Naive thymus-derived CD4-positive, alpha-beta T cell (primary cell): ENCODE measurements at regions of chr18 and their contacts with region 1.

Region 1: DNA sequence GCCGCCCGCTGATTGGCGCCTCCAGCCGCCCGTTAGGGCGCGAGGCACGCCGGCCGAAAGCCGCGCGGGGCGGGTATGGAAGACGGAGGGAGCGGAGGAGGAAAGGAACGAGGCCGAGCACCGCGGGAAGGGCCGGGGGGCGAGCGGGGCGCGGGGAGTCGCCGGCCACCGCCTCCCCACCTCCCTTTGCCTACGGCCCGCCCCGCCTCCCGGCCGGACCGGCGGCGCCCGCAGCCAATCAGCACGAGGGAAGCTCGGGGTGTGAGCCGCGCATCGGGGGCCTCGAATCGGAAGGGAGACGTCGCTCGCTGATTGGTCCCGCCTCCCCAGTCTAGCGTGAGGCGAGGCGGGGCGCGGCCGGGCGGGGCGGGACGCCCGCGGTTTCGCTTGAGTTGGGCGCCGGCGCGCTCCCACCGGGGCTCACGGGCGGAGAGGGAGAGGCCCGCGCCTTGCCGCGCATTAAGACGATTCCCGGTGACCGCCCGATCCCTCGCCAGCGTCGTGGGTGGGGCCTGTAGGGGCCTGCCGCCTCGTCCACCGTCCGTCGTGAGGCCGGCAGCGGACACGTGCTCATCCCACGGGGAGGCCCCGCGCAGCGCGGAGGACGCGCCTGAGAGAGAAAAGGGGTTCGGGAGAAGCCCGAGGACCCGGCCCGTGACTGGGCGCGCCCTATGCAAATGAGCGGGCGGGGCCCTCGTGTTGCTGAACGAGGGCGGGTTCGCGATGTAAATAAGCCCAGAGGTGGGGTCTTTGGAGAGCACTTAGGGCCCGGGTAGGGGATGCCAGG is 665 bp upstream of the SMAD2 start:
- DNase-seq: peak; percentile 91 to 96 (median 94)
- ATAC-seq: peak; percentile 88
- H3K4me3 ChIP-seq: peak overlapping the region; percentile 64
- H3K4me3 Mint-ChIP-seq: peak overlapping the region; percentile 78 to 92 (median 88)
- H3K27ac ChIP-seq: peak overlapping the region; percentile 91
- H3K27ac Mint-ChIP-seq: peak overlapping the region; percentile 89 to 98 (median 94)
- H3K4me1 ChIP-seq: peaks cover 19 to 36% of the 10 kb centered on the region in 2 donors
- H3K4me1 Mint-ChIP-seq: peaks cover 39 to 46% (median 42%) of the 10 kb centered on the region in 7 donors
- H3K27me3 ChIP-seq: no peaks in the 10 kb centered on the region
- H3K27me3 Mint-ChIP-seq: peaks cover 0 to 13% (median 0%) of the 10 kb centered on the region in 5 donors

Region 2: DNA sequence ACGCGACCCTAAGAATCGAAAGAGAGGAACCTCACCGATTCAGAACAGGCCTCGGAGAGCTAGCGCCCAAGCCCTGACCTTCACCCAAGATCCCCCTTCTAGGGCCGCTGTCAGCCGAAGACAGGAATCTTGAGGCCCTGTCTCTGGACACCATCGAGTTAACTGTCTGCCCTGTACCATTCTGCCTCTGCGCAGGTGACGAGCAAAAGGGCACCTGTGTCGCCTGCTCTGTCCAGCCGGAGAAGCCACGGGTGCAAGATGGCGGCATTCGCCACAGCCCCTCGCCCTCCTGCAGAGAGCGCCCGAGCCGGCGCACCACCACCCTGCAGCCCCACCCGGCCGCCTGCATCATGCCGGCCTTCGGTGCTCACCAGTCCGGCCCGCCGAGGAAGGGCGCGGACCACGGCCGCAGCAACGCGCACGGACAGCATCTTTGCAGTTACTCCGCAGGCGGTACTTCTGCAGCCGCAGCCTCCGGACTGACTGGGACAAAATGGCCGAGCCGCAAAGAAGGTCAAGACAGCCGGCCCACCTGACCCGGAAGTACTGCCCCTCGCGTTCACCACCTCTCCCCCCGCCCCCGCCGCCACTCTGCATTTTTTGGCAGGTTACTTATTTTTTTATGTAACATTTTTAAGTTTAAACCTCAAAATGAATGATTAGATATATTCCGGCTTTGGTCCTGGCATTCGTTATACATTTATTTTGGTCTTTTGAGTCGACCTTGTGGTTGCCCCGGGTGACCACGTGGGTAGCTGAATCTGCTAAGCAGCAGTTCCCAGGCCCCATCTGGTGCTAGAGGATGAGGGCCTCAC is 1833.1 kb before region 1 on chr18 and contains the start of gene ATP5F1A:
- CTCF ChIA-PET with region 1: no interaction called
- POLR2A ChIA-PET with region 1: no interaction called
- intact Hi-C with region 1: loop called (anchors 2 to 5 kb)
- DNase-seq: peak; percentile 69 to 86 (median 80)
- ATAC-seq: peak; percentile 94
- H3K4me3 ChIP-seq: peak within 1 kb of the TSS; percentile 92
- H3K4me3 Mint-ChIP-seq: peak within 1 kb of the TSS; percentile 92 to 99 (median 96)
- H3K27ac ChIP-seq: peak within 1 kb of the TSS; percentile 94
- H3K27ac Mint-ChIP-seq: peak within 1 kb of the TSS; percentile 94 to 99 (median 97)
- H3K4me1 ChIP-seq: peaks cover 18 to 32% of the 10 kb centered on the region in 2 donors
- H3K4me1 Mint-ChIP-seq: peaks cover 18 to 43% (median 35%) of the 10 kb centered on the region in 7 donors
- H3K27me3 ChIP-seq: no peaks in the 10 kb centered on the region
- H3K27me3 Mint-ChIP-seq: peaks cover 0 to 2% (median 0%) of the 10 kb centered on the region in 5 donors
- total RNA-seq, gene ATP5F1A: 181 to 311 (median 212) TPM

Region 3: DNA sequence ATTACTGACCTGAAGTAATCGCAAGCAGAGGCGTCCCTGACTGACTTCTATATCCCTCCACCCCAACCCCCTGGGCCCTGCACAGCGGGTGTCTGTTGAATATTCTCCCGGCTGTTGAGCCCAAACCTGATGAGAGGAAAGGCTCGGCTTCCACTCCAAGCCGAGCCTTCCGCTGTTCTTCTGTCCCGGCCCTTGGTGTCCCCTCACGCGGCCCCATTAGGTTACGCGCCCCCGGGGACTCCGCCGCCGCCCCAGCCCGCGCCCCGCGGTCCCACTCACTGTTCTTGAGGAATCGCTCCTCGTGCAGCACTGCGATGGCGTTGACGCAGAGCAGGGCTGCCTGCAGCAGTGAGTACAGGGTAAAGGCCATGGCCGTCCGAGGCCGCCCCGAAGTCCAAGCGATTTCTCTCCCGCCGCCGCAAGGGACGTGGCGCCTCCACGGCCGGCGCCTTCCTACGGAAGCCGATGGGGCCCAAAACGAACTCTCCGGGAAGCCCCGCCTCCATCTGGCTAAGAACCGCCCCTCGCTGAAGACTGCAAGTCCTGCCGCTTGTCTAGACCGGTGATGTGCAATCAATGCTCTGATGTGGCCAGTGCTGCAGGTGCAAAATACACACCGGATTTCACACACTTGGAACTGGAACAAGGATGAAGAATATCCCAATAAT is 755.1 kb before region 1 on chr18 and contains the start of gene IER3IP1:
- CTCF ChIA-PET with region 1: no interaction called
- POLR2A ChIA-PET with region 1: no interaction called
- intact Hi-C with region 1: loop called (anchors 2 to 5 kb)
- DNase-seq: peak; percentile 71 to 89 (median 85)
- ATAC-seq: peak; percentile 97
- H3K4me3 ChIP-seq: peak within 1 kb of the TSS; percentile 94
- H3K4me3 Mint-ChIP-seq: peak within 1 kb of the TSS in 8 of 10 donors; percentile 6 to 64 (median 53)
- H3K27ac ChIP-seq: peak within 1 kb of the TSS; percentile 72
- H3K27ac Mint-ChIP-seq: peak within 1 kb of the TSS in 6 of 9 donors; percentile 70 to 91 (median 82)
- H3K4me1 ChIP-seq: peaks cover 10 to 17% of the 10 kb centered on the region in 2 donors
- H3K4me1 Mint-ChIP-seq: peaks cover 0 to 9% (median 0%) of the 10 kb centered on the region in 7 donors
- H3K27me3 ChIP-seq: no peaks in the 10 kb centered on the region
- H3K27me3 Mint-ChIP-seq: peaks cover 0 to 12% (median 0%) of the 10 kb centered on the region in 5 donors
- total RNA-seq, gene IER3IP1: 3.5 to 13.4 (median 8.8) TPM

Region 4: DNA sequence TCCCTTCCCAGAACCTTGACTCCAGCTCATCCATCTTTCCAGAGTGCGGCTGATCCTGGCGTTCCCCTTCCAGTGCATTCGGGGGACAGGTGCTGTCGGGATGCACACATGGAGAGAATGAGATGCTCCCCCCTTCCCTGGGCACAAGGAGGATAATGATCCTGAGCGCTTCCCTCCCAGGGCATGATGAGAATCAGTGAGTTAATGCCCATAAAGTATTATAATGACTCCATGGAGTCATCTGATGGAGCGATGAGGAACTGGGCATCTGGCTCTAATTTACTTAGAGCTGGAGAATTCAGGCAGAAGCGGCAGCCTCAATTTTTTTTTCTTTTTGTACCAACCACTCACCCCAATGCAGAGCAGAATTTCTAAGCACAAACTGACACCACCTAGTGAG is 600.1 kb before region 1 on chr18:
- CTCF ChIA-PET with region 1: no interaction called
- POLR2A ChIA-PET with region 1: no interaction called
- intact Hi-C with region 1: no loop called
- DNase-seq: no peak
- ATAC-seq: no peak
- H3K4me3 ChIP-seq: no peak overlapping the region
- H3K4me3 Mint-ChIP-seq: no peak overlapping the region
- H3K27ac ChIP-seq: no peak overlapping the region
- H3K27ac Mint-ChIP-seq: no peak overlapping the region
- H3K4me1 ChIP-seq: no peaks in the 10 kb centered on the region
- H3K4me1 Mint-ChIP-seq: no peaks in the 10 kb centered on the region
- H3K27me3 ChIP-seq: no peaks in the 10 kb centered on the region
- H3K27me3 Mint-ChIP-seq: peaks cover 2 to 46% (median 10%) of the 10 kb centered on the region in 5 donors

Region 5: DNA sequence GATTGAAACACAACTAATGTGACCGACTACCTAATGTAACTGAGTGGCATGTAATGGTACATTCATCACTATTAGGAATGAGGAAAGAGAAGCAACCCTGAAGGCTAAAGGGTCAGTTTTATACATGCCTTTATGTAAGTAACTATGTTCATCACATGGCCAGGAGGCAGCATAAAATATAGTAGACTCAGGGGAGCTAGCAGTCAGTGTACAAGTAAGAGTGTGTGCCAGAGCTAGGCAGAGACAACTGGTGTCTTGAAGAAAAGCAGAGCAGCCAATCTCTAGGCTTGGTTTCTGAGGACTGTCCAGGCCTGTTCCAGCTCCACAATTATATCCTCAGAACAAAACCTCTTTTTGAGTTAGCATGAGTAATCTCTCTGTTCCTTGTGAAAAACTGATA is 18.8 kb before region 1 on chr18:
- CTCF ChIA-PET with region 1: interaction called, 3 read pairs
- POLR2A ChIA-PET with region 1: interaction called, 11 read pairs
- intact Hi-C with region 1: loop called (anchors 1 to 2 kb)
- DNase-seq: no peak
- ATAC-seq: peak; percentile 36
- H3K4me3 ChIP-seq: no peak overlapping the region
- H3K4me3 Mint-ChIP-seq: peak overlapping the region in 9 of 10 donors; percentile 32 to 71 (median 63)
- H3K27ac ChIP-seq: peak overlapping the region; percentile 67
- H3K27ac Mint-ChIP-seq: peak overlapping the region; percentile 17 to 89 (median 72)
- H3K4me1 ChIP-seq: peaks cover 13 to 33% of the 10 kb centered on the region in 2 donors
- H3K4me1 Mint-ChIP-seq: peaks cover 48 to 98% (median 90%) of the 10 kb centered on the region in 7 donors
- H3K27me3 ChIP-seq: no peaks in the 10 kb centered on the region
- H3K27me3 Mint-ChIP-seq: no peaks in the 10 kb centered on the region

Region 6: DNA sequence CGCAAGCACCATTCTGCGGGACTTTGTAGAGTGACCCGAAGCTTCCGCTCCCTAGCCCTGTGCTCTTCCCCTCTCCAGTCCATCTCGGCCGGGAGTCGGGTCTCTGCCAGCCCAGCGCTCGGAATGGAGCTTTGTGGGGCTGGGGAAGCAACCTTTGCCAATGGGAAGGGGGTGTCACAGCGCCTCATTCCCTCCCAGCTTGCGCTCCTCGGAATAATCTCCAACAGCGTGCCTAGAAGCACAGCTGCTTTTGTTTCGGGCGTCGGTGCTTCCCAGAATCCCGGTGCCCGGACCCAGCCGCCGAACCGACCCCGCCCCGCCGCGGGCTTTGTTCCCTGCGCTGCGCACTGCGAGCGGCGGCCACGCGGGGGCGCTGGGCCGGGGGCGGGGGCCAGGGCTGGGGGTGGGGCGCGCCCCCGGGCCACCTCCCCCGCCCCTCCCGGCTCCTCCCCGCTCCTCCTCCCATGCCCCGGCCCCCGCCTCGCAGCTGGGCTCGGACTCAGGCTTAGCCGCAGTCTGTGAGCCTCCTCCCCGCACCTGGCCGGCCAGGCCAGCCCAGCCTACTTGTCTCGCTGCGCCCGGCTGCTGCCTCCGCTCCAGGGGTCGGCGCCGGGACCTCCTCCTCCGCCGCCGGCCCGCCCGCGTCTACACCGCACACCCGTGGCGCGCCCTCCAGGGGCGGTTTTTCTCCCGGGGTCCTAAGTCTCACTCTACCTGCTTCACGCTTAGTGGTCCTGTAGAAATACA is 77.0 kb after region 1 on chr18:
- CTCF ChIA-PET with region 1: no interaction called
- POLR2A ChIA-PET with region 1: no interaction called
- intact Hi-C with region 1: loop called (anchors 1 kb)
- DNase-seq: peak; percentile 12 to 57 (median 42)
- ATAC-seq: peak; percentile 92
- H3K4me3 ChIP-seq: peak overlapping the region; percentile 39
- H3K4me3 Mint-ChIP-seq: peak overlapping the region; percentile 72 to 83 (median 76)
- H3K27ac ChIP-seq: no peak overlapping the region
- H3K27ac Mint-ChIP-seq: peak overlapping the region in 1 of 9 donors; percentile 31
- H3K4me1 ChIP-seq: peaks cover 3 to 6% of the 10 kb centered on the region in 2 donors
- H3K4me1 Mint-ChIP-seq: peaks cover 0 to 8% (median 6%) of the 10 kb centered on the region in 7 donors
- H3K27me3 ChIP-seq: no peaks in the 10 kb centered on the region
- H3K27me3 Mint-ChIP-seq: peaks cover 13 to 40% (median 22%) of the 10 kb centered on the region in 5 donors

Region 7: DNA sequence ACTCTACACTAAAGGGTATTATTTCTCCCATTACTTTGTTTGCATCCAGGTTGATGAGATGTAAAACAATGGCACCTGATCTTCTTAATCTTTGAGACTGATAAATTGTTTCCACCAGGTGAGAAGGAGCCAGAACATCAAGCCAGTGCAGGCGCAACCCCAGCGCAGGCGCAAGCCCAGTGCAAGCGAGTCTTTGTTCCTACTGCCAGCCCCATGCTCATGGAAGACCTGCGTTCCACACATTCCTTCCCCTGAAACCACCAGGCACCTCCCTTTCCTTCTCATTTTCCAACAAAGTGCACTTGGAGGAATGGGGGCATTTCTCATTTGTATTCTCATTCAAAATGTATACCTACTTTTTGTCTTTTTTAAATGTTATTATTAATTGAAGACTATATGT is 188.1 kb after region 1 on chr18:
- CTCF ChIA-PET with region 1: no interaction called
- POLR2A ChIA-PET with region 1: no interaction called
- intact Hi-C with region 1: no loop called
- DNase-seq: no peak
- ATAC-seq: no peak
- H3K4me3 ChIP-seq: no peak overlapping the region
- H3K4me3 Mint-ChIP-seq: no peak overlapping the region
- H3K27ac ChIP-seq: no peak overlapping the region
- H3K27ac Mint-ChIP-seq: no peak overlapping the region
- H3K4me1 ChIP-seq: no peaks in the 10 kb centered on the region
- H3K4me1 Mint-ChIP-seq: peaks cover 0 to 4% (median 0%) of the 10 kb centered on the region in 7 donors
- H3K27me3 ChIP-seq: no peaks in the 10 kb centered on the region
- H3K27me3 Mint-ChIP-seq: peaks cover 0 to 28% (median 8%) of the 10 kb centered on the region in 5 donors

Region 8: DNA sequence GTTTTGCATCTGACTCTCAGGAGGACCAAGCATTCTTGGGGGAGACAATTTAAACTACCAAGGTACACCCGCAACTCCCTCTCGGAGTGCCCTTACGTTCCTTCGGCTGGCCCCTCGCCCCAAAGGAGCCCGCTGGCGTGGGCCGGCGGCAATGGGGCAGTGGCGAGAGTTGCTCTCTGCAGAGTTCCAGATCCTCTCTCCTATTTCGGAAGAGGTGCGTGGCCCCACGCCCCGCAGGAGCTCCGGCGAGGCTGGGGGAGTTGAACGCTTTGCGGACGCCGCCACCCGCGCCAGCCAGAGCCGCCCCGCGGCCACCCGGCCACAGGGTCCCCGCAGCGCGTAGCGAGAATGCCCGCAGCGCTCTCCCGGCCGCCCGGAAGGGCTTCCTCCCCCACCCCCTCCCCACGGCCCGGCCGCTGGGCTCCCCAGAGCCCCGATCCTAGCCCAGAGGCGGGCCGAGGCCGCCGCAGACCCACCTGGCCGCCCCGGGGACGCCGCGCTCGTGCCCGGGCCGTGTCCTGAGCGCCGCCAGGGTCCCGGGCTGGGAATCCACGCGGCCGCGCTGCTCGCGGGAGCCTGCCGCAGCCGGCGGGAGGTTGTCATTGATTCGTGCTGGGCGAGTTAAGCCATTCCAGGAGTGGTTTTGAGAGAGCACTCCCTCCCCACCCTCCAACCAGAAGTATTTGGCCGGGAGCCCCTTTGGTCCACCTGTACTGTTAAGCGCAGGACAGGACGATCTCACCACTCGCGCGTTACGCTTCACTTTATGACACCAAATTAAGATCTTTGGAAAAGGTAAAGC is 205.6 kb after region 1 on chr18:
- CTCF ChIA-PET with region 1: no interaction called
- POLR2A ChIA-PET with region 1: no interaction called
- intact Hi-C with region 1: no loop called
- DNase-seq: peak in 1 of 9 donors; percentile 26
- ATAC-seq: no peak
- H3K4me3 ChIP-seq: no peak overlapping the region
- H3K4me3 Mint-ChIP-seq: peak overlapping the region; percentile 9 to 78 (median 46)
- H3K27ac ChIP-seq: no peak overlapping the region
- H3K27ac Mint-ChIP-seq: peak overlapping the region in 1 of 9 donors; percentile 29
- H3K4me1 ChIP-seq: no peaks in the 10 kb centered on the region
- H3K4me1 Mint-ChIP-seq: peaks cover 0 to 39% (median 10%) of the 10 kb centered on the region in 7 donors
- H3K27me3 ChIP-seq: no peaks in the 10 kb centered on the region
- H3K27me3 Mint-ChIP-seq: peaks cover 39 to 74% (median 43%) of the 10 kb centered on the region in 5 donors

Region 9: DNA sequence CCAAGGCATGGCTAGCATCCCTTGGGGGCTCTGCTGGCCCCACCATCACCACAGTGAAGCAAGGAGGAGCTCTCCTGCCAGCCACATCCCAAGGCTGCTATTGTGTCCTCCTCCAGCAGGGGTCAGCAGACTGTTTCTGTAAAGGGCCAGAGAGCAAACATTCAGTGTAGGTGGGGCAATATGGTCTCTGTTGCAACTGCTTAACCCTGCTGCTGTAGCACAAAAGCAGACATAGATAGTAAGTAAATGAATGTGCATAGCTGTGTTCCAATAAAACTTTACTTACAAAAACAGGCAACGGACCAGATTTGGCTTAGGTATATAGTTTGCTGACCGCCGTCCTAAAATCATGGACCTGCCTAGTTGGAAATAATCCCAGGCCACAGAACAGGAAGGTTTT is 514.4 kb after region 1 on chr18:
- CTCF ChIA-PET with region 1: no interaction called
- POLR2A ChIA-PET with region 1: no interaction called
- intact Hi-C with region 1: loop called in 1 of 2 experiments (anchors 1 kb)
- DNase-seq: peak; percentile 39 to 75 (median 68)
- ATAC-seq: peak; percentile 88
- H3K4me3 ChIP-seq: no peak overlapping the region
- H3K4me3 Mint-ChIP-seq: no peak overlapping the region
- H3K27ac ChIP-seq: no peak overlapping the region
- H3K27ac Mint-ChIP-seq: no peak overlapping the region
- H3K4me1 ChIP-seq: peaks cover 0 to 5% of the 10 kb centered on the region in 2 donors
- H3K4me1 Mint-ChIP-seq: peaks cover 0 to 13% (median 10%) of the 10 kb centered on the region in 7 donors
- H3K27me3 ChIP-seq: no peaks in the 10 kb centered on the region
- H3K27me3 Mint-ChIP-seq: peaks cover 49 to 56% (median 50%) of the 10 kb centered on the region in 5 donors

Region 10: GRCh38 chr18:49486953-49487710 is 1556.0 kb after region 1 on chr18 and contains the start of gene C18orf32:
- CTCF ChIA-PET with region 1: no interaction called
- POLR2A ChIA-PET with region 1: no interaction called
- intact Hi-C with region 1: loop called in 1 of 2 experiments (anchors 1 kb)
- DNase-seq: peak; percentile 84 to 93 (median 92)
- ATAC-seq: peak; percentile 94
- H3K4me3 ChIP-seq: peak within 1 kb of the TSS; percentile 95
- H3K4me3 Mint-ChIP-seq: peak within 1 kb of the TSS; percentile 77 to 98 (median 94)
- H3K27ac ChIP-seq: peak within 1 kb of the TSS; percentile 95
- H3K27ac Mint-ChIP-seq: peak within 1 kb of the TSS; percentile 90 to 98 (median 96)
- H3K4me1 ChIP-seq: peaks cover 34 to 39% of the 10 kb centered on the region in 2 donors
- H3K4me1 Mint-ChIP-seq: peaks cover 40 to 83% (median 70%) of the 10 kb centered on the region in 7 donors
- H3K27me3 ChIP-seq: no peaks in the 10 kb centered on the region
- H3K27me3 Mint-ChIP-seq: no peaks in the 10 kb centered on the region
- total RNA-seq, gene C18orf32: 22.5 to 53.6 (median 31.5) TPM